CD8-positive, alpha-beta T cell (primary cell): ENCODE measurements at regions of chr2 and their contacts with region 1.

Region 1: DNA sequence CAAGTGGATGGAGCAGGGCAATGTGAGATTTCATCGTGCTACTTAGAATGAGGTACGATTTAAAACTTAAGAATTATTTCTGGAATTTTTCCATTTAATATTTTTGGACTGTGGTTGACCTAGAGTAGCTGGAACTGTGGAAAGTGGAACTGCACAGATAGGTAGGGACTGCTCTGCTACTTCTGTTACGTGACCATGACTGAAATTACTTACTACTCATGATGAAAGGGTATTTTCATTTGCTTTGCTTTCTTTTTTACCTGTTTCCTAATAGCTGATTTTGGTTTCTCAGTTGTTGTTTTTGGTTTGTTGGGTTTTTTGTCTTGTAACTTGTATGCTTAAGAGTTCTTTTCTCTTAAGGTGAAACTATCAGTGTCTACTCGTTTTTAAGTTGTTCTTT is 11.4 kb downstream of the UBE2E3 start:
- DNase-seq: no peak
- ATAC-seq: no peak
- H3K4me3 ChIP-seq: no peak overlapping the region
- H3K4me3 Mint-ChIP-seq: no peak overlapping the region
- H3K27ac ChIP-seq: no peak overlapping the region
- H3K27ac Mint-ChIP-seq: no peak overlapping the region
- H3K4me1 ChIP-seq: no peaks in the 10 kb centered on the region
- H3K4me1 Mint-ChIP-seq: peaks cover 32% of the 10 kb centered on the region
- H3K27me3 ChIP-seq: no peaks in the 10 kb centered on the region
- H3K27me3 Mint-ChIP-seq: no peaks in the 10 kb centered on the region
- CTCF ChIP-seq: no peak

Region 2: DNA sequence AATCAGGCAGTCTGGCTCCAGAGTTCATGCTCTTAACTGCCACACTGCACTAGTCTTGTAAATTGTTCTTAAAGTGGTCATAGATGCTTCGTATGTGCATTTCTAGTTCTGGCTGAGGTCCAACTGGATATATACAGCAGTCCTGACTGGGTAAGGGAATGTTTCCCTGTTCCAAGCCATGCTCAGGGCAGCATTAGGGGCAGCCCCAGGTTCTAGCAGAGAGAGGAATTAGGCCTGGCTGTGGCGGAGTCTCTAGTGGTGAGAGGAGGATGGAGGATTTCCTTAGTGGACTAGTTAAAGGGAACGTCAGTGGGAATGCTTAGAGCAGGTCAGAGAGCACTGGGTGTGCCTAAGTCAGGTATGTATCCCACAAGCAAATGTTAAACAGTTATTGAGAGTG is 16.6 kb after region 1 on chr2:
- CTCF ChIA-PET with region 1: no interaction called
- POLR2A ChIA-PET with region 1: no interaction called
- intact Hi-C with region 1: loop called in 1 of 2 experiments (anchors 2 kb)
- DNase-seq: no peak
- ATAC-seq: no peak
- H3K4me3 ChIP-seq: no peak overlapping the region
- H3K4me3 Mint-ChIP-seq: no peak overlapping the region
- H3K27ac ChIP-seq: no peak overlapping the region
- H3K27ac Mint-ChIP-seq: no peak overlapping the region
- H3K4me1 ChIP-seq: peaks cover 3% of the 10 kb centered on the region
- H3K4me1 Mint-ChIP-seq: peaks cover 54% of the 10 kb centered on the region
- H3K27me3 ChIP-seq: no peaks in the 10 kb centered on the region
- H3K27me3 Mint-ChIP-seq: no peaks in the 10 kb centered on the region
- CTCF ChIP-seq: no peak